Activated CD4-positive, alpha-beta memory T cell treated with anti-CD3 and anti-CD28 coated beads, Interleukin-2, amount 10 ng/mL, durations not matched to agents 7 days and 5 days (primary cell): ENCODE measurements at regions of chr14 and their contacts with region 1.

Region 1: DNA sequence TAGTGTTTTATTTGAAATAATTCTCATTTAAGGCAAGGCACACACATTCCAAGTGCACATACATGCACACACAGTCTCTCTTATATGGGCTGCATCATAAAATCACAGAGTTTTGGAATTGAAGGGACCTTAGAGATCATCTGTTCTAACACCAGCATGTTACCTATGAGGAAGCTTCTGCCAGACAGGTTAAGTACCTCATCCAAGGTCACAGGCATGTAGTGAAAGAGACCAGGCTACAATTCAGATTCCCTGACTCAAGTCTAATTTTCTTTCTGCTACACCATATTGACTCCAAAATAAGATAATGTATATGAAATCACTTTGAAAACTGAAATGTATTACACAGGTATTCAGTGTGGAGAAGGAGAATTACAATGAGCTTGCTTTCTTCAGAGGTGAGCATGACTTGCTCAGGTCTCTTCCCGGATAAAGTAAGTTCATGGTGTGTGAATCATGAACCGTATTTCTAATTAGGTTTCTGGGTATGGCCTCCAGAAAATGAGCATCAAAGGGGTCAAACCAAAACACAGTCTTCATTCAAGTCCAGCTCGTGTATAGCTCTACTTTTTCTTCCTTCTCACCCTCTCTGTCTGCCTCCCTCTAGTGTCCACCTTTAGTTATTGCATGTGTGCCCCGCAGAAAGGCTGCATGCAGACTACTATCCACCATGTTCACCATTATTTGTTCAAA is 411.9 kb downstream of the FUT8 start:
- DNase-seq: peak; percentile 69
- H3K4me3 Mint-ChIP-seq: no peak overlapping the region
- H3K27ac Mint-ChIP-seq: no peak overlapping the region
- H3K4me1 Mint-ChIP-seq: peaks cover 14% of the 10 kb centered on the region
- H3K27me3 Mint-ChIP-seq: peaks cover 3% of the 10 kb centered on the region

Region 2: DNA sequence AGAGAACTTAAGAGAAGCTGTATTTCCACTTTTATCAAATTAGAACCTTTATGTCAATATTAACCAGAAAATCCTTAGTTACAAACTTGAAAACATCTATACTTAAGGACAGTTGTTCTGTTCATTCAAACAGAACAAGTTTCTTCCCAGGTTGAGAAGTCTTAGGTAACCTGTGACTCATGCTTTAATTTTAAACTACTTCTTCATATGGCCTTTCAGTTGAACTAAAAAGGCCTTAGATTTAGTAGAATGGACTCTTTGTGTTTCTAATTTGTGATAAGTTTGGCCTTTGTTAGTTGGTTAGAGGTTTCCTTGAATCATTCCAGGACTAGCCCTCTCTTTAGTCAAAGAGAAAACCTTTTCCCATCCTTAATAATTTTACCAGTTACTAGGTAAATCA is 137.7 kb before region 1 on chr14:
- CTCF ChIA-PET with region 1: no interaction called
- POLR2A ChIA-PET with region 1: no interaction called
- DNase-seq: no peak
- H3K4me3 Mint-ChIP-seq: no peak overlapping the region
- H3K27ac Mint-ChIP-seq: no peak overlapping the region
- H3K4me1 Mint-ChIP-seq: no peaks in the 10 kb centered on the region
- H3K27me3 Mint-ChIP-seq: no peaks in the 10 kb centered on the region

Region 3: GRCh38 chr14:65794674-65795279 is 29.7 kb before region 1 on chr14:
- CTCF ChIA-PET with region 1: interaction called, 10 read pairs
- POLR2A ChIA-PET with region 1: no interaction called
- DNase-seq: no peak
- H3K4me3 Mint-ChIP-seq: no peak overlapping the region
- H3K27ac Mint-ChIP-seq: no peak overlapping the region
- H3K4me1 Mint-ChIP-seq: no peaks in the 10 kb centered on the region
- H3K27me3 Mint-ChIP-seq: peaks cover 10% of the 10 kb centered on the region

Region 4: DNA sequence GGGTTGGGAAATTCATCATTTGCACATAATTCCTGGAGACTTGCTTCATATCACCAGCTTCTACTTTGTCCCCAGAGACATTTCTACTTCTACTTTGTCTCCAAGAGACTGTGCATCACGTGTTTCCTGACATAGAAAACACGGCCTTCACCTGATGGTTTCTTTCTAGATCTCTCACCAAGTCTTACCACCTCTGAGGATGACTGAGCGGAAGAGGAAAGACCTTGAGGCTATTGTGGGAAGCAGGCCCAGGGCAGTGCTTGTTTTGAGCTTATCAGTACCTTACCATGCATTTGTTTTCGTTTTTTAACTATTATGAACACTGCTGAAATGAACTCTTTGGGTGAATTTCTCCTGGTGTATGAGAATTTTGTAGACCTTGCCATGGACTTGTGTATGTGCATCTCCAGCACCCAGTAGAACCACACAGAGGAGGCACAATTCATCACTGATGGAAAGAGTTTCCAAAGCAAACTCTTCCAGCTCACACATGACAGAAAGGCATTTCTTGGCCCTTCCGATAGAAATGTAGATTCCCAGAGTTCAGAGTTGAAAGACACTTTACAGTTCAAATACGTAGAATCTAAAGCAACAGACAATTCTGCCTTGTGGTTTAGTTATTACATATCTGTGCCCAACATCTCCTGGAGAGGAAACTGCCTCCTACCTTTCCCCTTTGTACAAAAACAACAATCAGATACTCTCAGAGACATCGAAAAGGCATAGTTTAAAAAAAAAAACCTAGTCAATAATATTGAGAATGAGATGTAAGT is 22.8 kb after region 1 on chr14:
- CTCF ChIA-PET with region 1: interaction called, 52 read pairs
- POLR2A ChIA-PET with region 1: interaction called, 8 read pairs
- DNase-seq: peak; percentile 88
- H3K4me3 Mint-ChIP-seq: peak overlapping the region; percentile 55
- H3K27ac Mint-ChIP-seq: peak overlapping the region; percentile 97
- H3K4me1 Mint-ChIP-seq: peaks cover 76% of the 10 kb centered on the region
- H3K27me3 Mint-ChIP-seq: no peaks in the 10 kb centered on the region

Region 5: DNA sequence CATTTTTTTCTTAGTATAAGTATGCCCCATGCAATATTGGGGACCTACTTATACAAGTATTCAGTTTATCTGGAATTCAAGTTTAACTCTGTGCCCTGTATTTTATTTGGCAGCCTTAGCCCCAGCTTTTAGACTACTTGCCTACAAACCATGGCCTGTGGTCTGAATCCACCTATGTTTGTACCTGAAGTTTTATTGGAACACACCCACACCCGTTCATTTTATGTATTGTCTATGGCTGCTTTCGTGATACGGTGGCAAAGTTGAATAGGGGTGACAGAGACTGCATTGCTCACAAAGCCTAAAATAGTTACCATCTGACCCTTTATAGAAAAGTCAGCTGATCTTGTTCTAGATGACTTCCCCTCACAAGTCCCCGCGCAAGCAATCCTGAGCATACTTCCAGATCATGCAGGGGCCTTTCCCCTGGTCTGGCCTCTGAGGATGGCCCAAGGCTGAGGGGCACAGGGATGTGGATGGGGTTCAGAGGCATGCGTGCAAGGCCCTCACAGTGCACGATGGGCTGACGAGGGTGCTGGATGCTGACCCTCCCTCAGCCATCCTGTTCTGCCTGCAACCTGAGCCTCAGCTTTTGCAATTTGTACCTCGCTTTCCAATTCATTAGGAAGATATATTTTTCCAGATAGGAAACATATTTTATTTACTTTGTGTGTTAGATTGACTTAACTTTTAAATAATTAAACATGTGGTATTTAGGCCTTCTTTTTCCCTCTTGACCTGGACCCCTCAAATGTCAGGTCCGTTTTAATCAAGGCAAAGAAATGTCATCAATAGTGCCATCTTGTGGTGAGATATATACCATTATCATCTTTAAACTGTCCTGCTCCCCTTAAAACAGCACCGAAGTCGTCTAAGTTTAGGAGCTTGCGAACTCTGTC is 134.5 kb after region 1 on chr14:
- CTCF ChIA-PET with region 1: interaction called, 76 read pairs
- POLR2A ChIA-PET with region 1: interaction called, 5 read pairs
- DNase-seq: no peak
- H3K4me3 Mint-ChIP-seq: no peak overlapping the region
- H3K27ac Mint-ChIP-seq: no peak overlapping the region
- H3K4me1 Mint-ChIP-seq: peaks cover 34% of the 10 kb centered on the region
- H3K27me3 Mint-ChIP-seq: no peaks in the 10 kb centered on the region